Activated CD4-positive, alpha-beta memory T cell treated with anti-CD3 and anti-CD28 coated beads for 36 hours (primary cell): ENCODE measurements at regions of chr5 and their contacts with region 1.

Region 1: DNA sequence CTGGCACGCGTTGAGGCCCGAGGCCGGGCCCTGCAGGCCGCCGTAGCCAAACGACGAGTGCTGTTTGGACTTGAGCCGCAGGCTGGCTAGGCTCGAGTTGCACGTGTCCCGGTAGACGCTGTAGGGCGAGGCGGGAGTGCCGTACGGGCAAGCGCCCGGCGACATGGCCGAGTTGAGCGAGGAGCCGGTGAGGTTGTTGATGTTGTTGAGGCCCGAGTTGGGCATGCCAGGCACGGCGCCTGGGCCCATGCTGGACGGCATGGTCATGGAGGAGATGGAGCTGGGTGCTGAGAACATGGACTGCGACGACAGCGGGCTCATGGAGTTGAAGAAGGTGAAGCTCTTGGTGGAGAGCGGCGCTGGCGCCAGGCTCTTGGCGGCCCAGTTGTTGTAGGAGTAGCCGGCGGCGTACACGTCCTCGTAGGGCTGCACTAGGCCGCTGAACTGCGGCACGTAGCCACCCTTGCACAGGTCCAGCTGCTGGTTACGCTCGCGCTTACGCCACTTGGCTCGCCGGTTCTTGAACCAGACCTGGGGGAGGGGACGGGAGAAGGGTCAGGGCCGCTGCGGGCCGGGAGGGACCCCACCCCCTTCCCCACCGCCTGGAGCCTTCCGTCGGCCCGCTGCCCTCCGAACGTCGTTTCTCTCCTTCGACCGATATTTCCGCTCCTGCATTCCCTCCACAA is 5.1 kb downstream of the PITX1 start:
- DNase-seq: no peak
- H3K4me3 Mint-ChIP-seq: no peak overlapping the region
- H3K27ac Mint-ChIP-seq: no peak overlapping the region
- H3K4me1 Mint-ChIP-seq: peaks cover 28% of the 10 kb centered on the region
- H3K27me3 Mint-ChIP-seq: peaks cover 52% of the 10 kb centered on the region

Region 2: GRCh38 chr5:135013947-135014570 is 14.9 kb before region 1 on chr5:
- CTCF ChIA-PET with region 1: no interaction called
- POLR2A ChIA-PET with region 1: no interaction called
- intact Hi-C with region 1: no loop called
- DNase-seq: no peak
- H3K4me3 Mint-ChIP-seq: no peak overlapping the region
- H3K27ac Mint-ChIP-seq: no peak overlapping the region
- H3K4me1 Mint-ChIP-seq: no peaks in the 10 kb centered on the region
- H3K27me3 Mint-ChIP-seq: no peaks in the 10 kb centered on the region

Region 3: DNA sequence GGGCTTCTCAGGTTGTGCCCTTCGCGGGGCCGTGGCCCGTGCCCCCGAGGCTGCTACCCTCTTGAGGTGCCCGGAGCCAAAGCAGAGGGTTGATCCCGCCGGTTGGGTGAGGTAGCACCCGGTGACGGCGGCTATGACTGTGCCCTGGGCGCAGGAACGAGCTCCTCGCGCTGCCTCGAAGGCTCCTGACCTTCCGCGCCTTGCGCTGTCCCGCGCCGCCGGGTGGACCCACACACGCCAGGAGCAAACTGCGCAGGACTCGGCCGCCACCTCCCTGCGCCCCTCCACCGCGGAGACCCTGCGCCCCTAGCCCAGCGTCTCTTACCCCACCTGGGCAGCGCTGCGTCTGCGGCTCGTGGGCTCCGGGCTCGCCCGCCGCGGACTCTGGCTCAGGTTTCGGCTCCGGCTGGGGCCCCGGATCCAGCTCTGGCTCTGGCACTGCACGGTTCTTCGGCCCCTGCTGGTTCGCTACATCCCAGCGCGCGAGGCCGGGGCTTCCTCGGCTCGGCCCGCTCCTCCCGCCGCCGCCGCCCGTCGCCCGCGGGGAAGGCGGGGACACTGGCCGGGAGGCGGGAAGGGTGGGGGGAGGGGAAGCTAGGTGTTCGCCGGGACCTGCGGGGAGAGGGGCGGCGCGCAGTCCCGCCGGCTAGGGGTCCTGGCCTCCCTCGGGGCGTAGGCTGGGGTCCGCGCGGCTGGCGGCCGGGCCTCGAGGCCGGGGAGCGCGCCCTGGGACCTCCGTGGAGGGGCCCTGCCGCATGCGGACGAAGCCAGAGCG is 10.5 kb after region 1 on chr5:
- CTCF ChIA-PET with region 1: interaction called, 3 read pairs
- POLR2A ChIA-PET with region 1: no interaction called
- intact Hi-C with region 1: loop called (anchors 1 kb)
- DNase-seq: peak; percentile 34
- H3K4me3 Mint-ChIP-seq: no peak overlapping the region
- H3K27ac Mint-ChIP-seq: no peak overlapping the region
- H3K4me1 Mint-ChIP-seq: peaks cover 12% of the 10 kb centered on the region
- H3K27me3 Mint-ChIP-seq: peaks cover 72% of the 10 kb centered on the region